ENCODE measurements at regions of chr1 and their contacts with region 1.

Region 1: DNA sequence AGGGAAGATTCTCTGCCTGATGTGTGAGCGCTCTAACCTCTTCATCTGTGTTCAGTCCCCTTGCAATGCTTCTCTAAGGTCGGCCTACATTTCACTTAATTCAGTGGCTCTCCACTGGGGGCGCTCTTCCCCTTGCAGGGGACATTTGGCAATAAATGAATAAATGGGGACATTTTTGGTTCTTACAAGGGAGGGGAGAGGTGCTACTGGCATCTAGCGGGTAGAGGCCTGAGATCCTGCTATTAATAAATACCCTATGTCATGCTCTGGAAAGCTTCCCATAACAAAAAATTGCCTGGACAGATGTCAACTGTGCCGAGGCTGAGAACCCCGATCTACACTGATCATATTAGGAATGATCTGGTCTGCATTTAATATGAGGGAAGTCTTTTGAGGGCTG is 25.9 kb upstream of the DNAJC11 start:
- DNase-seq: peak; percentile 62
- H3K4me3 ChIP-seq: no peak overlapping the region
- H3K27ac ChIP-seq: no peak overlapping the region
- H3K4me1 ChIP-seq: no peaks in the 10 kb centered on the region
- H3K27me3 ChIP-seq: no peaks in the 10 kb centered on the region
- CTCF ChIP-seq: peak; percentile 87

Region 2: GRCh38 chr1:6889875-6890480 is 162.4 kb after region 1 on chr1:
- intact Hi-C with region 1: loop called (anchors 10 kb)
- DNase-seq: peak; percentile 69
- H3K4me3 ChIP-seq: no peak overlapping the region
- H3K27ac ChIP-seq: no peak overlapping the region
- H3K4me1 ChIP-seq: no peaks in the 10 kb centered on the region
- H3K27me3 ChIP-seq: no peaks in the 10 kb centered on the region
- CTCF ChIP-seq: peak; percentile 74

Region 3: GRCh38 chr1:7070389-7071029 is 343.0 kb after region 1 on chr1:
- intact Hi-C with region 1: loop called (anchors 5 kb)
- DNase-seq: peak; percentile 59
- H3K4me3 ChIP-seq: peak overlapping the region; percentile 4
- H3K27ac ChIP-seq: no peak overlapping the region
- H3K4me1 ChIP-seq: no peaks in the 10 kb centered on the region
- H3K27me3 ChIP-seq: no peaks in the 10 kb centered on the region
- CTCF ChIP-seq: peak; percentile 80

Region 4: DNA sequence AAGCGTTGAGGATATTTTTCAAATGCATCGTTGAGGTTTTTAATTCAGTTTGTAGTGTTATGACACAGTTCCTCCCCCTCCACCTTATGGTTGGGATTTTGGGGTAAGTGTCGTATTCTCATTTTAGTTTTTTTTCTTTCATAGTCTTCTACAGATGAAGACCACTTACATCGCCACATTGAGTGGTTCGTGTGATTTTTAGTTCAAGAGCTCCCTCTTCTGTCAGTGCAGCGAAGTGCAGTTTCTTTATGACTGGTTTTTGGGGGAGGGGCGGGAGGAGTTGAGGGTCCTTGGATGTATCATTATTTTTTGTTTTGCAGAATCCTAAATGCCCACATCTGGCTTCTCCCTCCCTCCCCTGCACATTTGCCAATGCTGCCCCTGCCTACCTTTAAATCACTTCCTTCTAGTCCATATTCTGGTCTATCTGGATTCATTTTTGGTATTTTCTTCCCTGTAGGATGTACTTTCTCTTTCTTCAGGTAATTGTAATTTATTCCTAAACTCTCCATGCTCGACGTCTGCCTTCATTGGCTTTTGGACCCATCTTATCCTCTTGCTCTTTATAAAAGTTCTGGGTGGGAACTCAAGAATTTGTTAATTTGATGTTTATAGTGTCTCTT is 490.8 kb after region 1 on chr1:
- intact Hi-C with region 1: loop called (anchors 5 kb)
- DNase-seq: peak; percentile 30
- H3K4me3 ChIP-seq: no peak overlapping the region
- H3K27ac ChIP-seq: no peak overlapping the region
- H3K4me1 ChIP-seq: no peaks in the 10 kb centered on the region
- H3K27me3 ChIP-seq: no peaks in the 10 kb centered on the region
- CTCF ChIP-seq: peak; percentile 62